Heart right ventricle (tissue), 16 donors: ENCODE measurements at regions of chr6 and their contacts with region 1.

Region 1: DNA sequence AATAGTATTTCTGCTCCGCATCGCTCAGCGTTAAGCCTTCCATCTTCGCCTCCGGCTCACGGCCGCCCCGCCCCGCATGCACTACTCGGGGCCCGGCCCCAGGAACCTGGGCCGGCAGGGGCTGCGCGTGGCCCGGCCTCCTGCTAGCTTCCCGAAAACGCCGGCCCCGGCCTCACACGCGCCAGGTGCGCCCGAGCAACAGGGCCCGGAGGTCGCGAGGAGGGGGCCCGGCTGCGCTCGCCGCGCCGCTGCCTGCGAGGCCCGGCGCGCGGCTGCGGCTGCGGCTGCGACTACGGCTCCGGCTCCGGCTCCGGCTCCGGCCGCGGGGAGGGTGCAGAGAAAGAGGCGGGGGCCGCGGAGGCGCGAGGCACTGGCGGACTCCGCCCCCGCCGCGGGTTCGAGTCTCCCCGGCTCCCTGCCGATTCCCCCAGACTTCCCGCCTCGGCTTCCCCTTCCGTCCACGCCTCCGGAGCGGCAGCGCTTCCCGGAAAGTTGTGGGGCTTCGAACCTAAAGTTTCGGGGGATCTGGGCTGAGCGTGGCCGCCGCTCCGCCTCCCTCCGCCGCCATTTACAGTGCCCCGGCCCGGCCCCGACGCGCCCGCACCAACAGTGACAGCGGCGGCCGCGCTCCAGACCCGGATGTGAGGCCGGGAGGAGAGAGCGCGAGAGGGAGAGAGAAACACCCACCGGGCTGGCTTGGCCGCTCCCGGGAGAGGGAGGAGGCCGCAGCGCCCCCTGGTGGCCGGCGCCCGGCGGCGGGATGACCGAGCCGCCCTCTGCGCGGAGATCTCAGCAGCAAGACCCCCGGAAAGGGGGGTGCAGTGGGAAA is at the start of gene REPS1:
- DNase-seq: peak; percentile 92 to 93
- ATAC-seq: peak; percentile 98
- H3K4me3 ChIP-seq: peak within 1 kb of the TSS; percentile 64 to 97 (median 92)
- H3K27ac ChIP-seq: peak within 1 kb of the TSS; percentile 79 to 97 (median 94)
- H3K4me1 ChIP-seq: peaks cover 0 to 49% (median 38%) of the 10 kb centered on the region in 9 donors
- H3K27me3 ChIP-seq: no peaks in the 10 kb centered on the region
- CTCF ChIP-seq: peak; percentile 97 to 100 (median 99)
- total RNA-seq, gene REPS1: 30.2 to 43.9 (median 39.4) TPM

Region 2: GRCh38 chr6:138912308-138912707 is 75.5 kb before region 1 on chr6:
- intact Hi-C with region 1: loop called in 2 of 10 experiments (anchors 10 kb)
- DNase-seq: no peak
- ATAC-seq: no peak
- H3K4me3 ChIP-seq: no peak overlapping the region
- H3K27ac ChIP-seq: no peak overlapping the region
- H3K4me1 ChIP-seq: no peaks in the 10 kb centered on the region
- H3K27me3 ChIP-seq: no peaks in the 10 kb centered on the region
- CTCF ChIP-seq: no peak

Region 3: GRCh38 chr6:138944412-138944811 is 43.4 kb before region 1 on chr6:
- intact Hi-C with region 1: loop called in 1 of 10 experiments (anchors 5 kb)
- DNase-seq: no peak
- ATAC-seq: no peak
- H3K4me3 ChIP-seq: no peak overlapping the region
- H3K27ac ChIP-seq: no peak overlapping the region
- H3K4me1 ChIP-seq: peaks cover 0 to 25% (median 8%) of the 10 kb centered on the region in 9 donors
- H3K27me3 ChIP-seq: no peaks in the 10 kb centered on the region
- CTCF ChIP-seq: no peak

Region 4: DNA sequence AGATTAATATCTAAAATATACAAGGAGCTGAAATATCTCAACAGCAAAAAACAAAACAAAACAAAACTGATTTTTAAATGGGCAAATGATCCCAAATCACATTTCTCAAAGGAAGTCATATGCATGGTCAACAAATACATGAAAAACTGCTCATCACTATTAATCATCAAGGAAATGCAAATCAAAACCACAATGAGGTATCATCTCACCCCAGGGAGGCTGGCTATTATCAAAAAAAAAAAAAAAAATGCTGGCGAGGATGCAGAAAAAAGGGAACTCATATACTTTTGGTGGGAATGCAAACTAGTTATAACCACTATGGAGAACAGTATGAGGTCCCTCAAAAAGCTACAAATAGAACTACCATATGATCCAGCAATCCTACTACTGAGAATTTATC is 34.4 kb before region 1 on chr6:
- intact Hi-C with region 1: loop called in 1 of 10 experiments (anchors 5 kb)
- DNase-seq: no peak
- ATAC-seq: no peak
- H3K4me3 ChIP-seq: no peak overlapping the region
- H3K27ac ChIP-seq: no peak overlapping the region
- H3K4me1 ChIP-seq: peaks cover 5 to 46% (median 28%) of the 10 kb centered on the region in 9 donors
- H3K27me3 ChIP-seq: no peaks in the 10 kb centered on the region
- CTCF ChIP-seq: no peak

Region 5: GRCh38 chr6:139028658-139029469 is 41.0 kb after region 1 on chr6 and contains the start of gene ABRACL:
- intact Hi-C with region 1: loop called in 1 of 10 experiments (anchors 5 kb)
- DNase-seq: peak; percentile 61 to 64
- ATAC-seq: peak; percentile 71 to 84 (median 78)
- H3K4me3 ChIP-seq: peak within 1 kb of the TSS; percentile 85 to 97 (median 95)
- H3K27ac ChIP-seq: peak within 1 kb of the TSS; percentile 38 to 96 (median 89)
- H3K4me1 ChIP-seq: peaks cover 0 to 49% (median 18%) of the 10 kb centered on the region in 9 donors
- H3K27me3 ChIP-seq: no peaks in the 10 kb centered on the region
- CTCF ChIP-seq: no peak
- total RNA-seq, gene ABRACL: 2.6 to 13.9 (median 5.2) TPM